ENCODE measurements at regions of chr4 and their contacts with region 1.

Region 1: DNA sequence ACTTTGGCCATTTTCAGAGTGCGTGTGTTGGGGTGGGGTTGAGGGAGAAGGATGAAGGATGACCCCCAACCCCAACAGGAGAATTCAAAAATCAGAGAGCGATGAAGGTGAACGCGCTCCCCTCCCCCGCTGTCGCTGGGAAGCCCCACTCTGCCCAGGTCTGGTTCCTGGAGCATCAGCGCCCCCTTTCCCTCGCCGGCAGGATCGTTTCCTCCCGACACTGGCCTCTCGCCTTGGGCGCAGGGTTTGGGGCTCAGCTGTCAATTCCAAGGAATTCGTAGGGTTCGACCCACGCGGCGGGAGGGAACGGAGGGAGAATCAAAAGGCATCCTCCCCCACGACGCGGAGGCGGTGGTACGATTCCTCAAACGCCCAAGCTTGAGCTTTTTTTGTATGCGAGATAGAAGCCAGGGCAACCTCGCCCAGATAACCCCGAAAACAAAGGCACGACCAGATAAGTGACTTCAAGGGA is 1.0 kb upstream of the PDGFRA start:
- DNase-seq: peak; percentile 74 to 86 (median 77)
- ATAC-seq: peak; percentile 63 to 74 (median 70)
- H3K4me3 ChIP-seq: peak overlapping the region in 11 of 12 donors; percentile 26 to 80 (median 53)
- H3K27ac ChIP-seq: peak overlapping the region in 10 of 12 donors; percentile 1 to 89 (median 68)
- H3K4me1 ChIP-seq: peaks cover 6 to 66% (median 53%) of the 10 kb centered on the region in 12 donors
- H3K27me3 ChIP-seq: peaks cover 48 to 98% (median 92%) of the 10 kb centered on the region in 9 donors
- CTCF ChIP-seq: peak; percentile 50 to 81 (median 74)
- POLR2A ChIP-seq: no peak

Region 2: DNA sequence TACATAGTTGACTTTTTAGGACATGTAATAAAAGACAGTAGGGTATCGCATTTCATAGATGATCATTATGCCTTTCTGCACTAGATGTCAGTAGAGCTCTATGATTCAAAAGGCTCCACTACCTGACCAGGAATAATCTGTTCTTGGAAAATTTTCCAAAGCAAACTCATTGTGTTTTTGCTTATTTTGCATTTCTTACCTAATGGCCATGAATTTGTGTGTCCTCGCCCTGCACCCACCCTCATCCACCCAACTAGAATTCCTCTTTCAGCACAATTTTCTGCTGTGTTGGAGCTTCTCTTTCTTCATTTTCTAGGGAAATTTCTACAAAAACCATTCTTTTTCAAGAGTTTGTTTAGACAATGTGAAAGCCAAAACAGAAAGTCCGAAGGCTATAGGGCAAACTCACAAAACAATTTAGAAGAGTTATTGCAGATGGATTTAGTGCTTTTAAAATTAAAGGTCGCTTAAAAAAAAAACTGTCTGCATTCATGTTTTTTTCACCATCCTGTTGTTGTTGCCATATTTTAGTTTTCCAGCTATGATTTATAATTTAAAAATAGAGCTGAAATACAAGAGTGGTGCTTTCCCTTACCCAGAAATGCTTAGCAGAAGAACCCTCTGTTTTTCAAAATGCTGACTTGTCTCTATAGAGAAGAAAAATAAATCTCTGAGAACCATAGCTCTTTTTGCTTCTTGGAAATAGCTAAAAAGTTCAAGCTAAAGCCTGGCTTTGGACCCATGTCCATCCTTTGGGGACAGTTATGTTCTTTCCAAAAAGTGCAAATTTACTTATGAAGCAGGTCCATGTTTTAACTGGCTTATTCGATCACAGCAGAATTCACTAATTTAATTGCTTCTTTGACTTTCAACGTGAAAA is 1993.3 kb before region 1 on chr4:
- intact Hi-C with region 1: loop called in 7 of 10 experiments (anchors 5 to 10 kb)
- DNase-seq: no peak
- ATAC-seq: peak; percentile 73 to 86 (median 78)
- H3K4me3 ChIP-seq: peak overlapping the region in 2 of 12 donors; percentile 2 to 6
- H3K27ac ChIP-seq: no peak overlapping the region
- H3K4me1 ChIP-seq: peaks cover 0 to 5% (median 0%) of the 10 kb centered on the region in 12 donors
- H3K27me3 ChIP-seq: peaks cover 0 to 3% (median 0%) of the 10 kb centered on the region in 9 donors
- CTCF ChIP-seq: peak in 11 of 12 donors; percentile 37 to 77 (median 64)
- POLR2A ChIP-seq: no peak

Region 3: GRCh38 chr4:53653484-53654053 is 574.5 kb before region 1 on chr4:
- intact Hi-C with region 1: loop called in 1 of 10 experiments (anchors 10 kb)
- DNase-seq: no peak
- ATAC-seq: peak in 1 of 4 donors; percentile 25
- H3K4me3 ChIP-seq: no peak overlapping the region
- H3K27ac ChIP-seq: peak overlapping the region in 7 of 12 donors; percentile 5 to 77 (median 32)
- H3K4me1 ChIP-seq: peaks cover 0 to 38% (median 17%) of the 10 kb centered on the region in 12 donors
- H3K27me3 ChIP-seq: no peaks in the 10 kb centered on the region
- CTCF ChIP-seq: peak in 3 of 12 donors; percentile 6 to 34 (median 17)
- POLR2A ChIP-seq: no peak

Region 4: DNA sequence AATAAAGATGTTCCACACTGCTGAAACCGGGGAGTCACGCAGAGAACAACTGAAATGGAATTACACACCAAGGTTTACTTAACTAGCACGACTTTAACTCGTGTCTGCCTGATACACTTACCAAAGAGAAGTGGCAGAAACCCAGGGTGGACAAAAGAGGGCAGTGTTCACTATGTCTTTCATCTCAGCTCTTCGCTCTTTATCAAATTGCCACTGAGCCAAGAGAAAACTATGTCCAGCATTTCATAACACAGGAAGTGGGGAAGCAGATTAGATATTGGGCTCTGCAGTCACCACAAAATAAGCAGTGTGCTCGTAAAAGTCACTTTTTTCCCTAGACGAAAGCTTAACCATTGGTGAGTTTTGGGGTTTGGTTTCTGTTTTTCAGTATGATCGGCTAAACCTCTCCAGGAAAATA is 319.4 kb before region 1 on chr4:
- intact Hi-C with region 1: loop called in 5 of 10 experiments (anchors 2 to 10 kb)
- DNase-seq: peak in 3 of 5 donors; percentile 37 to 50 (median 44)
- ATAC-seq: peak; percentile 84 to 94 (median 93)
- H3K4me3 ChIP-seq: peak overlapping the region in 8 of 12 donors; percentile 12 to 42 (median 27)
- H3K27ac ChIP-seq: peak overlapping the region in 8 of 12 donors; percentile 27 to 63 (median 40)
- H3K4me1 ChIP-seq: peaks cover 0 to 37% (median 14%) of the 10 kb centered on the region in 12 donors
- H3K27me3 ChIP-seq: peaks cover 0 to 32% (median 11%) of the 10 kb centered on the region in 9 donors
- CTCF ChIP-seq: peak; percentile 40 to 83 (median 67)
- POLR2A ChIP-seq: no peak

Region 5: GRCh38 chr4:53929955-53930798 is 297.9 kb before region 1 on chr4:
- intact Hi-C with region 1: loop called in 1 of 10 experiments (anchors 5 kb)
- DNase-seq: peak in 4 of 5 donors; percentile 66 to 80 (median 74)
- ATAC-seq: peak; percentile 88 to 94 (median 91)
- H3K4me3 ChIP-seq: no peak overlapping the region
- H3K27ac ChIP-seq: no peak overlapping the region
- H3K4me1 ChIP-seq: peaks cover 0 to 11% (median 0%) of the 10 kb centered on the region in 12 donors
- H3K27me3 ChIP-seq: no peaks in the 10 kb centered on the region
- CTCF ChIP-seq: peak; percentile 59 to 84 (median 71)
- POLR2A ChIP-seq: no peak

Region 6: DNA sequence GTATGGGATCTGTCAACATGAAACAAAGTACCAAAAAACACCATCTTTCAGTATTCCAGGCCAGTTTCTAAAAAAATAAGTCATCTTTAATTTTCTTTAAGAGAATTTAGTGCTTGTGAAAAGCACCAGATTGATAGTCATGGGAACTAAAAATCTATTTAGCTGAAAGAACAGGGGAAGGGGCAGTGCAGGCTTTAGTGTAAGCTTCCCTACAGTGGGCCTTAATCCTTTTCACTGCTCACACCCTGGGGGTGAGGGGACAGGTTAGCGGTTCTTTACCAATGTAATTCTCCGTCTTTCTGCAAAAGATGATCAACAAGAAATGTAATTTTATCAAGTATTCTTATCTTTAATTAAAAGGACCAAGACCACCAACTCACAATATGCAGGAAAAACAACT is 210.8 kb before region 1 on chr4:
- intact Hi-C with region 1: no loop called
- DNase-seq: no peak
- ATAC-seq: no peak
- H3K4me3 ChIP-seq: no peak overlapping the region
- H3K27ac ChIP-seq: no peak overlapping the region
- H3K4me1 ChIP-seq: peaks cover 0 to 13% (median 0%) of the 10 kb centered on the region in 12 donors
- H3K27me3 ChIP-seq: no peaks in the 10 kb centered on the region
- CTCF ChIP-seq: no peak
- POLR2A ChIP-seq: no peak

Region 7: GRCh38 chr4:54064295-54065111 is 163.6 kb before region 1 on chr4 and contains the start of gene CHIC2:
- intact Hi-C with region 1: loop called in 1 of 10 experiments (anchors 10 kb)
- DNase-seq: peak; percentile 96 to 99 (median 97)
- ATAC-seq: peak; percentile 74 to 95 (median 90)
- H3K4me3 ChIP-seq: peak within 1 kb of the TSS; percentile 84 to 100 (median 96)
- H3K27ac ChIP-seq: peak within 1 kb of the TSS; percentile 86 to 97 (median 94)
- H3K4me1 ChIP-seq: peaks cover 1 to 66% (median 53%) of the 10 kb centered on the region in 12 donors
- H3K27me3 ChIP-seq: no peaks in the 10 kb centered on the region
- CTCF ChIP-seq: no peak
- POLR2A ChIP-seq: peak; percentile 83 to 94
- total RNA-seq, gene CHIC2: 5.5 to 17.3 (median 11.2) TPM

Measured in heart left ventricle (tissue), 16 donors.